CD14-positive monocyte (primary cell): ENCODE measurements at regions of chr2 and their contacts with region 1.

Region 1: GRCh38 chr2:64586883-64587481 is 62.9 kb downstream of the AFTPH start:
- DNase-seq: peak; percentile 27 to 62 (median 54)
- H3K4me3 ChIP-seq: peak overlapping the region in 1 of 3 experiments; percentile 15
- H3K4me3 Mint-ChIP-seq: no peak overlapping the region
- H3K27ac ChIP-seq: peak overlapping the region in 1 of 2 donors; percentile 72
- H3K27ac Mint-ChIP-seq: peak overlapping the region; percentile 45 to 82 (median 70)
- H3K4me1 ChIP-seq: peaks cover 16 to 17% of the 10 kb centered on the region in 2 donors
- H3K4me1 Mint-ChIP-seq: peaks cover 17% of the 10 kb centered on the region
- H3K27me3 ChIP-seq: no peaks in the 10 kb centered on the region
- H3K27me3 Mint-ChIP-seq: no peaks in the 10 kb centered on the region
- CTCF ChIP-seq: peak; percentile 81

Region 2: GRCh38 chr2:64873472-64873924 is 286.5 kb after region 1 on chr2:
- intact Hi-C with region 1: loop called (anchors 2 kb)
- DNase-seq: peak; percentile 62 to 73 (median 70)
- H3K4me3 ChIP-seq: peak overlapping the region in 1 of 3 experiments; percentile 48
- H3K4me3 Mint-ChIP-seq: peak overlapping the region; percentile 47 to 70
- H3K27ac ChIP-seq: no peak overlapping the region
- H3K27ac Mint-ChIP-seq: peak overlapping the region in 2 of 7 donors; percentile 18 to 80
- H3K4me1 ChIP-seq: peaks cover 6 to 8% of the 10 kb centered on the region in 2 donors
- H3K4me1 Mint-ChIP-seq: peaks cover 13% of the 10 kb centered on the region
- H3K27me3 ChIP-seq: no peaks in the 10 kb centered on the region
- H3K27me3 Mint-ChIP-seq: peaks cover 0 to 4% (median 1%) of the 10 kb centered on the region in 3 donors
- CTCF ChIP-seq: peak; percentile 92

Region 3: GRCh38 chr2:65040400-65041261 is 453.6 kb after region 1 on chr2:
- intact Hi-C with region 1: loop called in 1 of 2 experiments (anchors 10 kb)
- DNase-seq: peak; percentile 76 to 81 (median 80)
- H3K4me3 ChIP-seq: no peak overlapping the region
- H3K4me3 Mint-ChIP-seq: peak overlapping the region; percentile 38 to 80
- H3K27ac ChIP-seq: no peak overlapping the region
- H3K27ac Mint-ChIP-seq: no peak overlapping the region
- H3K4me1 ChIP-seq: peaks cover 4 to 7% of the 10 kb centered on the region in 2 donors
- H3K4me1 Mint-ChIP-seq: peaks cover 8% of the 10 kb centered on the region
- H3K27me3 ChIP-seq: no peaks in the 10 kb centered on the region
- H3K27me3 Mint-ChIP-seq: peaks cover 0 to 2% (median 0%) of the 10 kb centered on the region in 3 donors
- CTCF ChIP-seq: peak; percentile 95